ENCODE measurements at regions of chr17 and their contacts with region 1.

Region 1: GRCh38 chr17:35103271-35103670 is 16.4 kb downstream of the RAD51D start:
- DNase-seq: no peak
- H3K4me3 ChIP-seq: no peak overlapping the region
- H3K27ac ChIP-seq: no peak overlapping the region
- H3K4me1 ChIP-seq: no peaks in the 10 kb centered on the region
- H3K27me3 ChIP-seq: no peaks in the 10 kb centered on the region
- CTCF ChIP-seq: no peak
- EP300 ChIP-seq: no peak
- POLR2A ChIP-seq: no peak

Region 2: GRCh38 chr17:35076874-35077273 is 26.4 kb before region 1 on chr17:
- in situ Hi-C with region 1: no loop called
- intact Hi-C with region 1: loop called (anchors 1 kb)
- DNase-seq: no peak
- H3K4me3 ChIP-seq: no peak overlapping the region
- H3K27ac ChIP-seq: peak overlapping the region in 3 of 4 donors; percentile 20 to 49 (median 34)
- H3K4me1 ChIP-seq: peaks cover 15 to 77% (median 37%) of the 10 kb centered on the region in 4 donors
- H3K27me3 ChIP-seq: no peaks in the 10 kb centered on the region
- CTCF ChIP-seq: no peak
- EP300 ChIP-seq: no peak
- POLR2A ChIP-seq: no peak